Sciatic nerve (tissue), 2 donors: ENCODE measurements at regions of chr12 and their contacts with region 1.

Region 1: DNA sequence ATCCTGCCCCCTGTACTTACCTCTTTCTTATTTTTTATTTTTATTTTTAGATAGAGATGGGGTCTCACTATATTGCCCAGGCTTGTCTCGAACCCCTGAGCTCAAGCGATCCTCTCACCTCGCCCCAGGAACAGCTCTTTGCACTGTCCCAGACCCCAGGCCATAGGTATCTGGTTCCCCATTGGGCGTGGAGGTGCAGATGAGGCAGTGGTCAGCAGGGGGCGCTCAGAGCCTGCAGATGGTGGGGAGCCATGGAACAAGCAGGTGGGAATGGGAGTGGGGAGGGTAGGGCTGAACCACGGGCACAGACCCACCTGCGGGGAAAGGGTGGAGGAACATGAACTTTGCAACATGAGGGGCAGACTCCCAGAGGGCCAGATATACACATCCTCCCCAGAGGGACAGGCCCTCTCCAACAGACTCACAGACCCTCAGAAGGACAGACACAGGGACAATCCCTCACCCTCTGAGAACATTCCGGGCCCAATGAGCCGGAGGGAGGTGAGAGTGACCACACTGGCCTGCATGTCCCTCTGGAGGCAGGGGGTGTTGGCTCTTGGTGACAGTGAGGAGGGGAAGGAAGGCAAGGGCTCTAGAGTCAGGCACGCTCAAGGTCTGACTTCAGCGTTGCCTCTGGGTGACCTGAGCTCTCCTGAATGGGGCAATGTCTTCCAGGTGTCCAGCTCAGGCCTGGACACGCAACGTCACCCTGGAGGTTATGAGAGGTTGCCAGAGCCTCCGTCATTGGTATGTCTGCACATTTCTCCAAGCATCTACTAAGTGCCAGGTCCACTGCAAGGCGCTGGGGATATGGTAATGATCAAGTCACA is 34.9 kb downstream of the KRT80 start:
- DNase-seq: peak; percentile 88
- ATAC-seq: peak; percentile 73

Region 2: GRCh38 chr12:52203075-52203921 is 46.3 kb after region 1 on chr12:
- intact Hi-C with region 1: no loop called
- DNase-seq: peak; percentile 78
- ATAC-seq: peak; percentile 66

Region 3: GRCh38 chr12:52213512-52214420 is 56.8 kb after region 1 on chr12:
- intact Hi-C with region 1: loop called (anchors 10 kb)
- DNase-seq: peak; percentile 82
- ATAC-seq: peak; percentile 72

Region 4: DNA sequence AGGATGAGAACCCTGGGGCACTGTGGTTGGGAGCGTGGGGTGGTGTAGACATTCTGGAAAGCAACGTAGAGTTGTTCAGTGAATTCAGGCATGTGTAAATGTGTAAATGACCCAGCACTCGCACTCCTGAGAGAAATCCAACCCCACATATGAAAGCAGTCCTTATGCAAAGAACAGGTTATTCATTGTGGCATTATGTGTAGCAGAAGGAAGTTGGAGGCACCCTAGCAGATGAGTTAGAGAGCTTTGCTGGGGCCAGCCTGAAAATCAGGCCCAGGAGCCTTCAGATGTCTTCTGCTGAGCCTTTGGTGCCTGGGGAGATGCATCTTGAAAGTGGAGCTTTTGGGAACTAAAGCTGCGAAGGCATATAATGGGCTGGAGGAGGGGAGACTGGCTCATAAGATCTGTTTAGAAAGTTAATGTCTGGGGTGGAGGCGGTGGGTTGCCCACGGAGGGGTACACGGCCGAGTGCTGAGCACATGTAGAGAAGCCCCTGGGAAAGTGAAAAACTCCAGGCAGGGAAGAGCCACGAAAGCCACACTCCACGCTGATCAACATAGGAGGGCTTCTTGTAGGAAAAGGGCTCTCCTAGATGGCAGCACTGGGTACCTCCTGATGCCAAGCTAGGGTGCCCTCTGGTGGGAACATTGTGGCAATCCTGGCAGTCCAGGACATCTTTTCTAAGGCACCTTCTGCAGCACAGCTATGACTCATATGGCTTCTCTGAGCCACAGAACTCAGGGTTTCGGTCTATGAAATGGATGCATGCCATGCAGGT is 170.3 kb after region 1 on chr12:
- intact Hi-C with region 1: loop called (anchors 10 kb)
- DNase-seq: peak; percentile 74
- ATAC-seq: peak; percentile 74

Region 5: GRCh38 chr12:52870351-52871290 is 713.7 kb after region 1 on chr12:
- intact Hi-C with region 1: loop called (anchors 5 kb)
- DNase-seq: peak; percentile 80
- ATAC-seq: peak; percentile 25

Region 6: DNA sequence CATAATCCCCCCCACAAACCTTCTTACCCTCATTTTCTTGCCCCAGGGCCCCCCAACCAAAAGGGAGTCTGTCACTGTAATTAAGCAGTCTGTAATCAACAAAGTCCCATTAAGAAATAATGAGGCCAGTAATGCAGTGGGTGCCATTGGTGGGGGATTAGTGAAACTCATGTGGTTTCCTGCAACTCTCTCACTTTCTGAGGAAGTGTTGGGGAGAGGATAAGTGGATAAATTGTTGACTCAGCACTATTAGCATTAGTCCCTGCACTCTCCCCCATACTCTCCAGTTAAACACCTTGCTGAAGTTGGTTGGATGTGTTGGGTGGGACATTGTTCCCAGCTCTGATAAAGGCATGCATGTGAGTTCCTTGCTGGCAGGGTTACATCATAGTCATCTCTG is 1735.8 kb after region 1 on chr12:
- intact Hi-C with region 1: no loop called
- DNase-seq: no peak
- ATAC-seq: no peak